WTC11 (cell line): ENCODE measurements at regions of chr11 and their contacts with region 1.

Region 1: GRCh38 chr11:66363805-66364535 is 7.6 kb downstream of the SLC29A2 start:
- DNase-seq: peak; percentile 96
- ATAC-seq: peak; percentile 75
- H3K4me3 Mint-ChIP-seq: no peak overlapping the region
- H3K27ac Mint-ChIP-seq: no peak overlapping the region
- H3K4me1 Mint-ChIP-seq: peaks cover 8% of the 10 kb centered on the region
- H3K27me3 Mint-ChIP-seq: no peaks in the 10 kb centered on the region
- CTCF ChIP-seq: peak; percentile 97

Region 2: GRCh38 chr11:66344550-66345315 is 19.2 kb before region 1 on chr11 and contains the start of gene BRMS1:
- CTCF ChIA-PET with region 1: interaction called, 20 read pairs
- POLR2A ChIA-PET with region 1: interaction called, 3 read pairs
- DNase-seq: peak; percentile 98
- ATAC-seq: peak; percentile 53
- H3K4me3 Mint-ChIP-seq: peak within 1 kb of the TSS; percentile 96
- H3K27ac Mint-ChIP-seq: peak within 1 kb of the TSS; percentile 95
- H3K4me1 Mint-ChIP-seq: peaks cover 26% of the 10 kb centered on the region
- H3K27me3 Mint-ChIP-seq: peaks cover 4% of the 10 kb centered on the region; the same call in 1 of the 2 replicates
- CTCF ChIP-seq: no peak
- total RNA-seq, gene BRMS1: 37.0 to 44.5 TPM (median 40.8 TPM) in 3 replicates

Region 3: GRCh38 chr11:66459138-66459778 is 95.3 kb after region 1 on chr11:
- CTCF ChIA-PET with region 1: no interaction called
- POLR2A ChIA-PET with region 1: no interaction called
- DNase-seq: no peak
- ATAC-seq: no peak
- H3K4me3 Mint-ChIP-seq: no peak overlapping the region
- H3K27ac Mint-ChIP-seq: no peak overlapping the region
- H3K4me1 Mint-ChIP-seq: peaks cover 6% of the 10 kb centered on the region
- H3K27me3 Mint-ChIP-seq: no peaks in the 10 kb centered on the region; the same call in 1 of the 2 replicates
- CTCF ChIP-seq: no peak

Region 4: DNA sequence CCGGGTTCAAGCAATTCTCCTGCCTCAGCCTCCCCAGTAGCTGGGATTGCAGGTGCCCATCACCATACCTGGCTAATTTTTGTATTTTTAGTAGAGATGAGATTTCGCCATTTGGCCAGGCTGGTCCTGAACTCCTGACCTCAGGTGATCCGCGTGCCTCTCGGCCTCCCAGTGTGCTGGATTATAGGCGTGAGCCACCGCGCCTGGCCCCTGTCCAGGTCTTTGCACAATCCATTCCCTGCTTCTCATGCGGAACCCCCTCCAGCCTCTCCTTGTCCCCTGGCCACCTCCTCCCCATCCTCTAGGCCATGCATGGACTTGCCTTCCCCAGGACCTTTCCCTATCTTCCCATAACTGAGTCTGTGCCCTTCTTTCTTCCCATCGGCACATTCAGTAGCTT is 125.0 kb after region 1 on chr11:
- CTCF ChIA-PET with region 1: no interaction called
- POLR2A ChIA-PET with region 1: no interaction called
- DNase-seq: no peak
- ATAC-seq: no peak
- H3K4me3 Mint-ChIP-seq: no peak overlapping the region
- H3K27ac Mint-ChIP-seq: peak overlapping the region; percentile 92; the same call in 1 of the 2 replicates
- H3K4me1 Mint-ChIP-seq: peaks cover 6% of the 10 kb centered on the region
- H3K27me3 Mint-ChIP-seq: no peaks in the 10 kb centered on the region
- CTCF ChIP-seq: no peak